GM18951 (cell line): ENCODE measurements at regions of chr2 and their contacts with region 1.

Region 1: GRCh38 chr2:38740851-38741731 is 10.1 kb downstream of the SRSF7 start:
- POLR2A ChIP-seq: no peak

Region 2: GRCh38 chr2:38315707-38316333 is 425.3 kb before region 1 on chr2:
- in situ Hi-C with region 1: loop called (anchors 25 kb)
- POLR2A ChIP-seq: no peak

Region 3: DNA sequence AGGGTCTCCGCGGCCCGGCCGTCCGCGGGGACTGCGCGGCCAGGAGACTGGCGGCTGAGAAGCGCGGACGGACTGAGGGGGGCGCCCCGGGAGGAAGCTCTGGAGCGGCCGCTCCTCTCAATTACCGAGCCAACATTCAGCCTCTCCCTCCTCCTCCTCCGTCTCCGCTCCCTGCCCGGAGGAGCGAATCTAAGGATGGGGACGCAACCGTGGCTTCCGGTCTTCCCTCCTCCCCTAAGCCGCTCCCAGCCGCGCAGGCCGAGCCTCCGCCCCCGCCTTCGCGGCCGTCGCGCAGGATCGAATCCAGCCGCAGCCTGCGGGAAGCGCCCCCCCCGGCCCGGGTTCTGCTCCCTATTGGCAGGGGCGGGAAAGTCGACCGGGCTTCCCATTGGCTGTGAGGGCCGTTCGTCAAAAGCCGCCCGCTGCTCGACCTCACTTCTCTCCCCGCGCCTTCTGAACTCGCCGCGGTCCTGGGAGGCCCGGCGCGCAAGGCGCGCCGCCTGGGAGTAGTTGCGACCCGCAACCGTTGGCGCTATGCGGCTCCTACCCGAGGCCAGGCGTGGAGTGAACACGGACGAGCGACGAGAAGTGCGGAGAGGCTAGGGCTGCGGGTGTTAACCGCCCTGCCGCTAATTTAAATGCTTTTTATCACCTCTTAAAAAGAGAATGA is 138.2 kb before region 1 on chr2 and contains the start of gene HNRNPLL:
- in situ Hi-C with region 1: loop called (anchors 10 kb)
- POLR2A ChIP-seq: peak; percentile 51

Region 4: GRCh38 chr2:38665854-38666555 is 75.1 kb before region 1 on chr2 and contains the start of gene GALM:
- in situ Hi-C with region 1: no loop called
- POLR2A ChIP-seq: peak; percentile 23